Activated CD4-positive, alpha-beta T cell treated with anti-CD3 and anti-CD28 coated beads for 36 hours (primary cell): ENCODE measurements at regions of chr7 and their contacts with region 1.

Region 1: DNA sequence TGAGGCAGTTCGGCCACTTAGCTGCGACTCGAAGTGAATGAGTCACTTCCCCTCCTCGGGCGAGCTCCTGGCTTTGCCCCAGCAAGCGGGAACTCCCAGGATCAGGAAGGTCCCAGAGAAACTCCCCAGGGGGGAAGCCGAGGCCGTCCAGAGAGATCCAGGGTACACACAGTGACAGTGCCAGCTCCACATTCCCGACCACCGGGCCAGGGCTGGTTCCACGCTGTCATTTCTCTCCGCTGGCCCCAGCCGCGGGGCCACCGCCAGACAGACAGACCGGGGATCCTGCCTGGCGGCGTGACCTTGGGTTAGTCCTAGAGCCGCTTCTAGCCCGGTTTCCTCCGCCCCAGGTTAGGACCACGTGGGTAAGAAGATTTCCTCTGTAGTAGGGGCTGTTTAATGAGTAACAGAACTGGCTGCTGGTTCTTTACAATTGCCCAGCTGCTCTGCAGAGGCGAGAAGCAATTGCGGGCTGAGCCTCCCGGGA is 463 bp upstream of the UPP1 start:
- DNase-seq: no peak
- ATAC-seq: peak; percentile 73
- H3K4me3 Mint-ChIP-seq: peak overlapping the region; percentile 81
- H3K27ac Mint-ChIP-seq: peak overlapping the region; percentile 96
- H3K4me1 Mint-ChIP-seq: peaks cover 67% of the 10 kb centered on the region
- H3K27me3 Mint-ChIP-seq: no peaks in the 10 kb centered on the region

Region 2: DNA sequence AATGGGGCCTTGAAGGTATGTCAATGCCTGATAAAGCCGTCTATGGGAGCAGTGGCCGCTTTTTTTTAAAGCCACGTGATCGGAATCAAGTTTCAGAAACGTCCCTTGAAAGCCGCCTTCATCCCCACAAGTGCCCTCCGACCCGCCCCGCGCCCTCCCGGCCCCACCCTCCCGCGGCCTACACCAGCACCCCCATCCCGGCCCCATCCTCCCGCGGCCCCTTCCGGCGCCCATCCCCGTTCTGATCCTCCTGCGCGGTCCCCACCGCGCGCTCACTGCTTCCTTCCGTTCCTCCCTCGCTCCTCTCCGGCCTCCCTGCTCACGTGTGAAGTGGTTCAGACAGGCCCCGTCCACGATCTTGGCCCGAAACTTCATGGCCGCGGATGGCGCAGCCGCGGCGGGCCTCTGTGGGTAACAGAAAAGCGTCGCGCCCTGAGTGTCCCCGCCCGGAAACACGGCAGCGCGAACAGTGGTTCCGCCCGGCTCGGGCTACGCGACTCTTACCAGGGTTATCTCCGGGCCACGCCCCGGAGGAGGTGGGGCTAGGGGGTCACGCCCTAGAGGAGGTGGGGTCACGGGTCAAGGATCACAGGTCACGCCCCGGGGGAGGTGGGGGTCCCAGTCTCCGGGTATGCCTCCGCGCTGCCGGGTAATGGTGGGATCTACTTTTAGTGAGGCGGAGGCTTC is 109.3 kb before region 1 on chr7 and contains the start of gene HUS1:
- CTCF ChIA-PET with region 1: interaction called, 3 read pairs
- POLR2A ChIA-PET with region 1: no interaction called
- intact Hi-C with region 1: loop called (anchors 1 kb)
- DNase-seq: peak; percentile 95
- ATAC-seq: peak; percentile 98
- H3K4me3 Mint-ChIP-seq: peak within 1 kb of the TSS; percentile 88
- H3K27ac Mint-ChIP-seq: peak within 1 kb of the TSS; percentile 98
- H3K4me1 Mint-ChIP-seq: peaks cover 25% of the 10 kb centered on the region
- H3K27me3 Mint-ChIP-seq: no peaks in the 10 kb centered on the region
- total RNA-seq, gene HUS1: 40.5 to 41.5 TPM

Region 3: GRCh38 chr7:48035301-48035966 is 53.2 kb before region 1 on chr7 and contains the start of gene C7orf57:
- CTCF ChIA-PET with region 1: no interaction called
- POLR2A ChIA-PET with region 1: no interaction called
- intact Hi-C with region 1: loop called (anchors 1 kb)
- DNase-seq: peak; percentile 92
- ATAC-seq: peak; percentile 100
- H3K4me3 Mint-ChIP-seq: peak within 1 kb of the TSS; percentile 71
- H3K27ac Mint-ChIP-seq: no peak within 1 kb of the TSS
- H3K4me1 Mint-ChIP-seq: peaks cover 5% of the 10 kb centered on the region
- H3K27me3 Mint-ChIP-seq: peaks cover 36% of the 10 kb centered on the region
- total RNA-seq, gene C7orf57: 0.33 to 0.46 TPM

Region 4: GRCh38 chr7:48109848-48110663 is 21.5 kb after region 1 on chr7:
- CTCF ChIA-PET with region 1: interaction called, 22 read pairs
- POLR2A ChIA-PET with region 1: no interaction called
- intact Hi-C with region 1: no loop called
- DNase-seq: peak; percentile 93
- ATAC-seq: peak; percentile 93
- H3K4me3 Mint-ChIP-seq: no peak overlapping the region
- H3K27ac Mint-ChIP-seq: no peak overlapping the region
- H3K4me1 Mint-ChIP-seq: peaks cover 10% of the 10 kb centered on the region
- H3K27me3 Mint-ChIP-seq: no peaks in the 10 kb centered on the region

Region 5: DNA sequence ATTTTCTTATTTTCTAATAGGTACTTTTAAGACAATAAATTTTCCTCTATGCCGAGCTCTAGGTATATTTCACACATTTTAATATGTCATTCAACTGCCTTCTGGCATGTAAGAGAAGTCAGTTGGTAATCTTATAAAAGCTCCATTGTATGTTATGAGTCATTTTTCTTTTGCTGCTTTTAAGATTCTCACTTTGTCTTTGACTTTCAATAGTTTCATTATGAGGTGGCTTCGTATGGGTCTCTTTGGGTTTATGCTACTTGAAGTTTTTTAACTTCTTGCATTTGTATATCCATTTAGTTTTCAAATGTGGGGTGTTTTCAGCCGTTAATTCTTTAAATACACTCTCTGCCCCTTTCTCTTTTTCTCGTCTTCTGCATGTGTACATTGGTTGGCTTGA is 163.2 kb after region 1 on chr7:
- CTCF ChIA-PET with region 1: no interaction called
- POLR2A ChIA-PET with region 1: no interaction called
- intact Hi-C with region 1: loop called in 1 of 2 experiments (anchors 2 kb)
- DNase-seq: no peak
- ATAC-seq: peak; percentile 76
- H3K4me3 Mint-ChIP-seq: no peak overlapping the region
- H3K27ac Mint-ChIP-seq: no peak overlapping the region
- H3K4me1 Mint-ChIP-seq: peaks cover 14% of the 10 kb centered on the region
- H3K27me3 Mint-ChIP-seq: peaks cover 13% of the 10 kb centered on the region